Heart right ventricle (tissue), 16 donors: ENCODE measurements at regions of chr5 and their contacts with region 1.

Region 1: DNA sequence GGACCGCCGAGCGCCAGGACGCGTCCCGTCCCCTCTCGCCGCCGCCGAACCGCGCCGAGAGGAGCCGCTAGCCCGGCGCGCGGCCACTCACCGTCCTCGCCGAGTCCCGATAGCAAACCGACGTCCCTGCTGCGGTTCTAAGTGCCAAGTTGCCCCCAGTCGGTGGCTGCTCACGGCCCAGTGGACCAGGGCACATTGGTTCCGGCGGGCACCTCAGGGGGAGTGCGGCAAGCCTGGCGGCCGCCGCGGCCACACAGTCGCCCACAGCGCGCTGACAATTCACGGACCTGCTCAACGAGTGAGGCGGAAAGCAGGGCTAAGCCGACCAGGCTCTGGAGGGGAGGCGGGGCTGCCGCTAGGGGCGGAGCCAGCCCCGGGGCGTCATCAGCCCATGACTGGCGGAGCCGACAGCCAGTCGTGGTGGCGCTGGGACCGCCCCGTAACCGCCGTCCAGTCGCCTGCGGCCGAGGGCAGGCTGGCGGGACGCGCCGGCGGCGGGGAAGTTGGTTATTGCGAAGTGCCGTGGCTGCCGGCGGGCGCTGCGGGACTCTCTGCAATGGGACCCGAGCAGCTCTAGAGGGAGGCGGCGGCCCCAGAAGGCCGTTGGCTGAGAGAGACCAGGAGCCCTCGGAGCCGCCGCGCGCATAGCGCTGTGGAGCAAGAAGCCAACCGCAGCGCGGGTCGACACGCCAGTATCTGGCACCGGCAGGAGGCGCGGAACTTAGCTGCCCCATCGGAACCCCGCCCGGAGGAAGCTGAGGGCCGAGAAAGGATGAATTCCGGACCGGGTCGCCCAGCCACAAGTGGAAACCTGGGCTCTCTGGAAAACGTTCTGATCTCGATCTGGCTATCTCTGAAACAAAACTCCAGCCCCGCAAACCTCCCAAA is at the start of gene MARCHF3:
- DNase-seq: peak; percentile 93 to 96
- ATAC-seq: peak; percentile 98 to 100 (median 99)
- H3K4me3 ChIP-seq: peak within 1 kb of the TSS; percentile 52 to 94 (median 82)
- H3K27ac ChIP-seq: peak within 1 kb of the TSS; percentile 63 to 96 (median 93)
- H3K4me1 ChIP-seq: peaks cover 5 to 49% (median 35%) of the 10 kb centered on the region in 9 donors
- H3K27me3 ChIP-seq: peaks cover 0 to 14% (median 0%) of the 10 kb centered on the region in 7 donors
- CTCF ChIP-seq: peak in 7 of 9 donors; percentile 18 to 51 (median 35)
- total RNA-seq, gene MARCHF3: 16.8 to 57.4 (median 45.9) TPM

Region 2: DNA sequence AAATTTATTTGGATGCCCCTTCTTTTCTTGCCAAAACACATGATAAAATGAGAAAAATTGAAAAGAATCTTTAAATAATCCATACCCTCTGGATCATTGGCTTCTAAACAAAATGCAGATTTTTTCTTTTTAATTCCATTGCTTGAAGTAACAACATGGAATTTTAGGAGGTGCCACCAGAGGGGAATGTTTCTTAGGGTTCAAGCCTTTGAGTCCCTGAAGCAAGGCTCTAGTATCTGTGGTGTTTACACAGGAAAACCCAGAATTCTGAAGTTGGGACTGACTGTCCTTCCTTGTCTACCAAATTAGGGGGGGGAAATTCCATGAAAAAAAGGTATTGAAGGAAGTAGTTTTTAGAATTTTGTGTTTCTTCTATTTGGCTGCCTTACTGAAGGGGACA is 184.2 kb before region 1 on chr5:
- intact Hi-C with region 1: loop called in 6 of 10 experiments (anchors 2 to 10 kb)
- DNase-seq: no peak
- ATAC-seq: peak in 2 of 8 donors; percentile 41 to 48
- H3K4me3 ChIP-seq: no peak overlapping the region
- H3K27ac ChIP-seq: peak overlapping the region in 3 of 10 donors; percentile 14 to 70 (median 59)
- H3K4me1 ChIP-seq: peaks cover 2 to 57% (median 39%) of the 10 kb centered on the region in 9 donors
- H3K27me3 ChIP-seq: no peaks in the 10 kb centered on the region
- CTCF ChIP-seq: peak in 4 of 9 donors; percentile 20 to 31 (median 28)

Region 3: GRCh38 chr5:126852091-126852571 is 178.4 kb before region 1 on chr5:
- intact Hi-C with region 1: loop called in 6 of 10 experiments (anchors 2 to 10 kb)
- DNase-seq: no peak
- ATAC-seq: peak; percentile 40 to 66 (median 56)
- H3K4me3 ChIP-seq: peak overlapping the region in 1 of 10 donors; percentile 24
- H3K27ac ChIP-seq: peak overlapping the region in 9 of 10 donors; percentile 16 to 81 (median 64)
- H3K4me1 ChIP-seq: peaks cover 0 to 60% (median 36%) of the 10 kb centered on the region in 9 donors
- H3K27me3 ChIP-seq: no peaks in the 10 kb centered on the region
- CTCF ChIP-seq: no peak

Region 4: GRCh38 chr5:126917918-126918614 is 112.4 kb before region 1 on chr5:
- intact Hi-C with region 1: loop called in 4 of 10 experiments (anchors 5 to 10 kb)
- DNase-seq: no peak
- ATAC-seq: no peak
- H3K4me3 ChIP-seq: no peak overlapping the region
- H3K27ac ChIP-seq: no peak overlapping the region
- H3K4me1 ChIP-seq: peaks cover 2 to 61% (median 36%) of the 10 kb centered on the region in 9 donors
- H3K27me3 ChIP-seq: no peaks in the 10 kb centered on the region
- CTCF ChIP-seq: no peak

Region 5: GRCh38 chr5:126947146-126948010 is 83.1 kb before region 1 on chr5:
- intact Hi-C with region 1: no loop called
- DNase-seq: no peak
- ATAC-seq: peak in 6 of 8 donors; percentile 47 to 91 (median 58)
- H3K4me3 ChIP-seq: no peak overlapping the region
- H3K27ac ChIP-seq: peak overlapping the region in 2 of 10 donors; percentile 16 to 17
- H3K4me1 ChIP-seq: peaks cover 0 to 49% (median 25%) of the 10 kb centered on the region in 9 donors
- H3K27me3 ChIP-seq: no peaks in the 10 kb centered on the region
- CTCF ChIP-seq: no peak

Region 6: DNA sequence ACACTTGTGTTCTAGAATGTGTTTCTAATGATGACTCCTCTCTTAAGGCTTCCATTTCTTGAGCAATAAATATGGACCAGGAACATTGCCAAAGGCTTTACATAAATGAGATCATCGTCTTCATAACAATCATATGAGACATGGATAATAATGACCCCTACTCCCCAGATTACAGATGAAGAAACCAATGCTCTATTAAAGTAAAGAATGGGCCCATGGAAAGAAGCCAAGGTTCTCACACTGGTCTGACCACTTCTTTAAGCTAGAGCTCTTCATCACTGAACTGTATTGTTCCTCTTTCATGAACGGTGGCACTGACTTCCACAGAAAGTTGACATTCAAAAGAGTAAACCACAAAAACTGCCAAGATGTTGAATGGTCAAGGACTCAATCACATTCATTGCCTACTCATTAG is 65.4 kb before region 1 on chr5:
- intact Hi-C with region 1: loop called in 6 of 10 experiments (anchors 5 to 10 kb)
- DNase-seq: no peak
- ATAC-seq: no peak
- H3K4me3 ChIP-seq: no peak overlapping the region
- H3K27ac ChIP-seq: peak overlapping the region in 1 of 10 donors; percentile 32
- H3K4me1 ChIP-seq: peaks cover 0 to 53% (median 8%) of the 10 kb centered on the region in 9 donors
- H3K27me3 ChIP-seq: no peaks in the 10 kb centered on the region
- CTCF ChIP-seq: no peak

Region 7: DNA sequence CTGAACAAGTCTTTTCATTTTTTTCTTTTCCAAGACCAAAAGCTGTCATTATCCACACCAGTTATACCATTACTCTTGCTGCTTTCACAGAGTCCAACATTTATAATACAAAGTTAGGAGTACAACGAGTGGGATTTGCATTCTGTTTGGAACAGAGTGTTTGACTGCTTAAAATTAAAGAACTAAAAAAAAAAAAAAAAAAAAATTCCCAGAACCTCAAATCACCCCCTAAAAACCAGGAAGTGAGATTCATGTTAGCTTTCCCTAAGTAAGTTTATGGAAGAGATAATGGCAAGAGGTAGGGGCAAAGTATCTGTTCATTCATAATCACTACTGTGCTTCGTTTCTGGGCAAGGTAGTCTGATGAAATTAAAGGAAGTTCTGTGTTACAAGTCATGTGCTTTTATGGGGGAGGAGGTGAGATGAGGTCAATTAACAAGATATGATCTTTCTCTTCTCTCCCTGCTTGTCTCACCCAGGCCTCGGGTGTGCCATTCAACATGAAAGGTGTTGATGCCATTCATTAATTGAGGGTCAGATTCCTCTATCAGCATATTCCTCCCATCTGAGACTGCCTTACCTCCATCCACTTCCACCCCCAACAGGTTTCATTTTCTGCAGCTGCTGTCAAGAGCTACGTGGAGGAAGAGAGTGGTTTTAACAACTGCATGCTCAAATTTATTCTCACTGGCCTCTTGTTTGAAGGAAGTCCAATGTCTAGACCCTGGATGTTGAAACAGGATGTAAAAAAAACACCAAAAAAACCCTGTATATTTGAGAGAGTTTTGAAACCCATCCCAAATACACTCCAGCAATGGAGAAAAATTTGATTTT is 58.2 kb before region 1 on chr5:
- intact Hi-C with region 1: loop called in 6 of 10 experiments (anchors 1 to 10 kb)
- DNase-seq: no peak
- ATAC-seq: peak in 1 of 8 donors; percentile 17
- H3K4me3 ChIP-seq: no peak overlapping the region
- H3K27ac ChIP-seq: peak overlapping the region in 8 of 10 donors; percentile 27 to 83 (median 66)
- H3K4me1 ChIP-seq: peaks cover 11 to 58% (median 47%) of the 10 kb centered on the region in 9 donors
- H3K27me3 ChIP-seq: no peaks in the 10 kb centered on the region
- CTCF ChIP-seq: no peak

Region 8: GRCh38 chr5:127072861-127073846 is 42.7 kb after region 1 on chr5 and contains the start of gene C5orf63:
- intact Hi-C with region 1: loop called in 2 of 10 experiments (anchors 5 kb)
- DNase-seq: peak; percentile 45 to 71
- ATAC-seq: peak; percentile 84 to 95 (median 91)
- H3K4me3 ChIP-seq: peak within 1 kb of the TSS; percentile 23 to 67 (median 62)
- H3K27ac ChIP-seq: peak within 1 kb of the TSS in 9 of 10 donors; percentile 52 to 74 (median 61)
- H3K4me1 ChIP-seq: peaks cover 0 to 48% (median 18%) of the 10 kb centered on the region in 9 donors
- H3K27me3 ChIP-seq: no peaks in the 10 kb centered on the region
- CTCF ChIP-seq: peak in 6 of 9 donors; percentile 12 to 33 (median 27)
- total RNA-seq, gene C5orf63: 9.7 to 18.3 (median 12.9) TPM